ENCODE measurements at regions of chr14 and their contacts with region 1.

Region 1: DNA sequence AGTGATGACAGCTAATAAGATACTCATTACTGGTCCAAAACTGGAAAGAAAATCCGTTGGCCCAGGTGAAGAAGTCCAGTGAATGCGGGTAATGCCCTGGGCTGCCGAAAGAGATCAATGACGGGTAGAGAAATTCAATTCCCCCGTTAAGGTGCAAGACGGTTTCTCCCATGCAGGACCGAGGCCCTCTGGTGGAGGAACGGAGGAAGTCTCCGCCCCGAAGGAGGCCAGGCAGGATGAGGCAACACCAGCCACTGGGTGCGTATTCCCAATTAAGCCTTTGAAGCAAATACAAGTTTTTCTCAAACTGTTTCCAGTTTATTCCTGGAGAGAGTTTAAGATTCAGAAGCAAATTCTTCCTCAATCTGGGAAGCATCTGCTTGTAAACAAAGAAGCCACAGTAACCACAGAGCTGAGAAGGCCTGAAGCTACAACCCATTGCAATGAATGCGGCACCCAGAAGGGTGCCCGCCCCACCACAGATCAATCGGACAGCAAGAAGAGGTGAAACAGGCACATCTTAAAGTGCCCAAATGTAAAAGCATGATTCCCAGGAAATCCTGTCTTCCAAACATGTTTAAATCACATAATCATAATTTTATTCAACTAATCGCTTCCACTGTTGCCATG is 118.5 kb downstream of the TTC7B start:
- DNase-seq: peak; percentile 82
- ATAC-seq: peak; percentile 92
- H3K4me3 Mint-ChIP-seq: no peak overlapping the region
- H3K27ac Mint-ChIP-seq: no peak overlapping the region
- H3K4me1 Mint-ChIP-seq: peaks cover 6% of the 10 kb centered on the region
- H3K27me3 Mint-ChIP-seq: no peaks in the 10 kb centered on the region

Region 2: GRCh38 chr14:90301668-90302090 is 396.0 kb before region 1 on chr14:
- CTCF ChIA-PET with region 1: interaction called, 24 read pairs
- POLR2A ChIA-PET with region 1: no interaction called
- DNase-seq: no peak
- ATAC-seq: no peak
- H3K4me3 Mint-ChIP-seq: no peak overlapping the region
- H3K27ac Mint-ChIP-seq: no peak overlapping the region
- H3K4me1 Mint-ChIP-seq: peaks cover 10% of the 10 kb centered on the region
- H3K27me3 Mint-ChIP-seq: no peaks in the 10 kb centered on the region

Region 3: DNA sequence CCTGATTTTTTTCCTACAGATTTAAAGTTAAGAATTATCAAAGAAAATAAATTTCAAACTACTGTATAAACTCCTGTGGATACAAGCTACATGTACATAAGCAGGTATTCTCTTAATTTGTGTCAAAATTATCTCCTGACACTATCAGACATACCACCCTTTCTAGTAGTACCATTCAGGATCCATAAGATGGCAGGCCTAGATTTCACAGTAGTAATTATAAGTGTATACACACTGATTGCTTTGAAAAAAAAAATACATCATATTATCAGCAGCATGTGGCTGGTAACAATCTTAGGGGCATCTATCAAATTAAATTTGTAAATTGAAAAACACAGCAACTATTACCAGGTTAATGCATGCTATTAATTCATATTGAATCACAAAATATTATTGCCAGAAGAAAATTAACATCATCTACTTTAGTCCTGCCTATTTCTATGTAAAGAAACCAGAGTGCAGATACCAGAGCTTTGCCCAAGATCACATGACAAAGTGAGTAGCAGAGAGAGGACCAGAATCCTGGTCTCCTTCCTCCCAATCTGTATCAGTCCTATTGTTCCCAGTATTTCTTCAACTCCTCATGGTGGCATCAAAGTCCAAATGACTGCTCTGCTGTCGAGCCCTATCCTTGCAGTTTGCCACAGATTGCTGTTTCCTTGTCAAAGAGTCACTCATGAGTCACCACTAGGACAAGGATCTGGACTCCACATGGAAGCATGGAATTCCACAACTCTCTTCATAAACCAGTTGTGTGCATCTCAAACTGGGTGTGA is 328.6 kb before region 1 on chr14:
- CTCF ChIA-PET with region 1: interaction called, 16 read pairs
- POLR2A ChIA-PET with region 1: no interaction called
- DNase-seq: no peak
- ATAC-seq: peak; percentile 74
- H3K4me3 Mint-ChIP-seq: no peak overlapping the region
- H3K27ac Mint-ChIP-seq: no peak overlapping the region
- H3K4me1 Mint-ChIP-seq: no peaks in the 10 kb centered on the region
- H3K27me3 Mint-ChIP-seq: no peaks in the 10 kb centered on the region

Region 4: GRCh38 chr14:90399541-90400444 is 297.9 kb before region 1 on chr14:
- CTCF ChIA-PET with region 1: interaction called, 83 read pairs
- POLR2A ChIA-PET with region 1: no interaction called
- DNase-seq: peak; percentile 93
- ATAC-seq: peak; percentile 52
- H3K4me3 Mint-ChIP-seq: peak overlapping the region; percentile 92
- H3K27ac Mint-ChIP-seq: peak overlapping the region; percentile 97
- H3K4me1 Mint-ChIP-seq: peaks cover 47% of the 10 kb centered on the region
- H3K27me3 Mint-ChIP-seq: no peaks in the 10 kb centered on the region

Region 5: GRCh38 chr14:90658541-90658967 is 39.1 kb before region 1 on chr14:
- CTCF ChIA-PET with region 1: interaction called, 15 read pairs
- POLR2A ChIA-PET with region 1: no interaction called
- DNase-seq: no peak
- ATAC-seq: peak; percentile 83
- H3K4me3 Mint-ChIP-seq: no peak overlapping the region
- H3K27ac Mint-ChIP-seq: no peak overlapping the region
- H3K4me1 Mint-ChIP-seq: peaks cover 10% of the 10 kb centered on the region
- H3K27me3 Mint-ChIP-seq: peaks cover 2% of the 10 kb centered on the region

Region 6: GRCh38 chr14:90681439-90681838 is 16.3 kb before region 1 on chr14:
- CTCF ChIA-PET with region 1: interaction called, 16 read pairs
- POLR2A ChIA-PET with region 1: no interaction called
- DNase-seq: no peak
- ATAC-seq: no peak
- H3K4me3 Mint-ChIP-seq: no peak overlapping the region
- H3K27ac Mint-ChIP-seq: no peak overlapping the region
- H3K4me1 Mint-ChIP-seq: peaks cover 31% of the 10 kb centered on the region
- H3K27me3 Mint-ChIP-seq: no peaks in the 10 kb centered on the region

Region 7: GRCh38 chr14:90687680-90688079 is 10.0 kb before region 1 on chr14:
- CTCF ChIA-PET with region 1: interaction called, 16 read pairs
- POLR2A ChIA-PET with region 1: no interaction called
- DNase-seq: no peak
- ATAC-seq: no peak
- H3K4me3 Mint-ChIP-seq: no peak overlapping the region
- H3K27ac Mint-ChIP-seq: no peak overlapping the region
- H3K4me1 Mint-ChIP-seq: no peaks in the 10 kb centered on the region
- H3K27me3 Mint-ChIP-seq: peaks cover 4% of the 10 kb centered on the region

Measured in activated CD8-positive, alpha-beta T cell treated with anti-CD3 and anti-CD28 coated beads, Interleukin-2, amount 10 ng/mL, durations not matched to agents 7 days and 5 days (primary cell).